ENCODE measurements at regions of chr11 and their contacts with region 1.

Region 1: GRCh38 chr11:695538-696248 is at the start of gene TMEM80:
- DNase-seq: peak; percentile 68
- ATAC-seq: peak; percentile 86
- H3K4me3 ChIP-seq: peak within 1 kb of the TSS; percentile 83
- H3K27ac ChIP-seq: peak within 1 kb of the TSS; percentile 96
- H3K4me1 ChIP-seq: peaks cover 24% of the 10 kb centered on the region
- H3K27me3 ChIP-seq: no peaks in the 10 kb centered on the region
- CTCF ChIP-seq: no peak
- EP300 ChIP-seq: no peak
- POLR2A ChIP-seq: peak; percentile 89
- RAD21 ChIP-seq: no peak
- polyA plus RNA-seq, gene TMEM80: 6.7 to 8.8 TPM

Region 2: DNA sequence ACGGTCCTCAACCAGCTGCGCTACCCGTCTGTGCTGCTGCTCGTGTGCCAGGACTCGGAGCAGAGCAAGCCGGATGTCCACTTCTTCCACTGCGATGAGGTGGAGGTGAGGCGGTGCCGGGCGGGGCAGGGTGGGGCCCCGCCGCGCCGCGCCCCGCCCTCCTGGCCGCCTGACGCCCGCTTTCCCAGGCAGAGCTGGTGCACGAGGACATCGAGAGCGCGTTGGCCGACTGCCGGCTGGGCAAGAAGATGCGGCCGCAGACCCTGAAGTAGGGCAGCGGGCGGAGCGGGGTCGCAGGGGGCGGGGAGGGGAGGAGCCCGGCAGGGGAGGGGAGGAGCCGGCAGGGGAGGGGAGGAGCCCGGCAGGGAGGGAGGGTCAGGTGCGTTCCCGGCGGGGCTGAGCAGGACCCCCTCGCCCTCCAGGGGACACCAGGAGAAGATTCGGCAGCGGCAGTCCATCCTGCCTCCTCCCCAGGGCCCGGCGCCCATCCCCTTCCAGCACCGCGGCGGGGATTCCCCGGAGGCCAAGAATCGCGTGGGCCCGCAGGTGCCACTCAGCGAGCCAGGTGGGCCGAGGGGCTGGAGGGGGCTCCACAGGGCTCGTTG is 25.1 kb after region 1 on chr11:
- CTCF ChIA-PET with region 1: interaction called, 127 read pairs
- POLR2A ChIA-PET with region 1: interaction called, 72 read pairs
- RAD21 ChIA-PET with region 1: interaction called, 112 read pairs
- SMC1A ChIA-PET with region 1: interaction called, 30 read pairs
- in situ Hi-C with region 1: no loop called
- intact Hi-C with region 1: loop called (anchors 2 kb)
- DNase-seq: no peak
- ATAC-seq: peak; percentile 79
- H3K4me3 ChIP-seq: peak overlapping the region; percentile 57
- H3K27ac ChIP-seq: no peak overlapping the region
- H3K4me1 ChIP-seq: peaks cover 12% of the 10 kb centered on the region
- H3K27me3 ChIP-seq: 0 out of 4 replicates have a peak, but pooled peaks cover 0 to 3% of the 10 kb centered on the region in 2 experiments
- CTCF ChIP-seq: no peak
- EP300 ChIP-seq: no peak
- POLR2A ChIP-seq: no peak
- RAD21 ChIP-seq: no peak